PC-3 (cell line): ENCODE measurements at regions of chr11 and their contacts with region 1.

Region 1: GRCh38 chr11:73693899-73694525 is 47.6 kb downstream of the PLEKHB1 start:
- DNase-seq: no peak
- ATAC-seq: no peak
- H3K4me3 ChIP-seq: no peak overlapping the region
- H3K27ac ChIP-seq: no peak overlapping the region
- H3K4me1 ChIP-seq: no peaks in the 10 kb centered on the region
- H3K27me3 ChIP-seq: no peaks in the 10 kb centered on the region
- CTCF ChIP-seq: no peak

Region 2: GRCh38 chr11:73671701-73672100 is 22.3 kb before region 1 on chr11:
- CTCF ChIA-PET with region 1: no interaction called
- POLR2A ChIA-PET with region 1: interaction called, 16 read pairs
- intact Hi-C with region 1: no loop called
- DNase-seq: no peak
- ATAC-seq: no peak
- H3K4me3 ChIP-seq: no peak overlapping the region
- H3K27ac ChIP-seq: no peak overlapping the region
- H3K4me1 ChIP-seq: no peaks in the 10 kb centered on the region
- H3K27me3 ChIP-seq: no peaks in the 10 kb centered on the region
- CTCF ChIP-seq: no peak

Region 3: GRCh38 chr11:73705053-73705452 is 11.0 kb after region 1 on chr11:
- CTCF ChIA-PET with region 1: no interaction called
- POLR2A ChIA-PET with region 1: interaction called, 18 read pairs
- intact Hi-C with region 1: no loop called
- DNase-seq: no peak
- ATAC-seq: no peak
- H3K4me3 ChIP-seq: no peak overlapping the region
- H3K27ac ChIP-seq: no peak overlapping the region
- H3K4me1 ChIP-seq: no peaks in the 10 kb centered on the region
- H3K27me3 ChIP-seq: no peaks in the 10 kb centered on the region
- CTCF ChIP-seq: no peak

Region 4: DNA sequence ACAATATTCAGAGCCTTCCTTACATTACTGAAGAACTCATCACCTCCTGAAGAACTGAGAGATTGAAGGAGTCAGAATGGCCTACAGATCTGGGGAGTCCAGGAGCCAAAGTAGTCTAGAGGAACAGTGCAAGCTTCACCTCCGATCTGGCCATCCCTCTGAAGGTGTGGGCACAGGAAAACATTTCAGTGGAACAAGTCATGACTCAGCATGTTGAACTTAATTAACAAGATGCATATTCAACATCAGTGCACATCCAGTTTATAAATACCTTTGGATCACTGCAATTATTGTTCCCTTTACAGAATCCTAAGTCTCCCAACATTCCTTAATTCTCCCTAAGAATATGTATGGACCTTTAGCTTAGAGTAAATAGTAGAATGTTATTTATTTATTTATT is 208.3 kb after region 1 on chr11:
- CTCF ChIA-PET with region 1: no interaction called
- POLR2A ChIA-PET with region 1: no interaction called
- intact Hi-C with region 1: no loop called
- DNase-seq: no peak
- ATAC-seq: no peak
- H3K4me3 ChIP-seq: no peak overlapping the region
- H3K27ac ChIP-seq: no peak overlapping the region
- H3K4me1 ChIP-seq: peaks cover 7% of the 10 kb centered on the region
- H3K27me3 ChIP-seq: no peaks in the 10 kb centered on the region
- CTCF ChIP-seq: no peak